Activated CD4-positive, alpha-beta T cell treated with anti-CD3 and anti-CD28 coated beads for 36 hours (primary cell): ENCODE measurements at regions of chr13 and their contacts with region 1.

Region 1: GRCh38 chr13:42271337-42272114 is 426 bp upstream of the AKAP11 start:
- DNase-seq: peak; percentile 95
- ATAC-seq: peak; percentile 87
- H3K4me3 Mint-ChIP-seq: peak overlapping the region; percentile 99
- H3K27ac Mint-ChIP-seq: peak overlapping the region; percentile 93
- H3K4me1 Mint-ChIP-seq: peaks cover 48% of the 10 kb centered on the region
- H3K27me3 Mint-ChIP-seq: no peaks in the 10 kb centered on the region

Region 2: GRCh38 chr13:41061075-41061913 is 1210.2 kb before region 1 on chr13 and contains the start of gene WBP4:
- CTCF ChIA-PET with region 1: no interaction called
- POLR2A ChIA-PET with region 1: no interaction called
- intact Hi-C with region 1: loop called in 1 of 2 experiments (anchors 10 kb)
- DNase-seq: peak; percentile 93
- ATAC-seq: peak; percentile 77
- H3K4me3 Mint-ChIP-seq: peak within 1 kb of the TSS; percentile 98
- H3K27ac Mint-ChIP-seq: peak within 1 kb of the TSS; percentile 100
- H3K4me1 Mint-ChIP-seq: peaks cover 57% of the 10 kb centered on the region
- H3K27me3 Mint-ChIP-seq: no peaks in the 10 kb centered on the region
- total RNA-seq, gene WBP4: 13.3 to 16.2 TPM

Region 3: GRCh38 chr13:41456768-41457588 is 814.5 kb before region 1 on chr13 and contains the start of gene RGCC:
- CTCF ChIA-PET with region 1: no interaction called
- POLR2A ChIA-PET with region 1: no interaction called
- intact Hi-C with region 1: loop called (anchors 2 to 10 kb)
- DNase-seq: peak; percentile 96
- ATAC-seq: peak; percentile 74
- H3K4me3 Mint-ChIP-seq: peak within 1 kb of the TSS; percentile 82
- H3K27ac Mint-ChIP-seq: peak within 1 kb of the TSS; percentile 97
- H3K4me1 Mint-ChIP-seq: peaks cover 36% of the 10 kb centered on the region
- H3K27me3 Mint-ChIP-seq: no peaks in the 10 kb centered on the region
- total RNA-seq, gene RGCC: 134 to 146 TPM

Region 4: DNA sequence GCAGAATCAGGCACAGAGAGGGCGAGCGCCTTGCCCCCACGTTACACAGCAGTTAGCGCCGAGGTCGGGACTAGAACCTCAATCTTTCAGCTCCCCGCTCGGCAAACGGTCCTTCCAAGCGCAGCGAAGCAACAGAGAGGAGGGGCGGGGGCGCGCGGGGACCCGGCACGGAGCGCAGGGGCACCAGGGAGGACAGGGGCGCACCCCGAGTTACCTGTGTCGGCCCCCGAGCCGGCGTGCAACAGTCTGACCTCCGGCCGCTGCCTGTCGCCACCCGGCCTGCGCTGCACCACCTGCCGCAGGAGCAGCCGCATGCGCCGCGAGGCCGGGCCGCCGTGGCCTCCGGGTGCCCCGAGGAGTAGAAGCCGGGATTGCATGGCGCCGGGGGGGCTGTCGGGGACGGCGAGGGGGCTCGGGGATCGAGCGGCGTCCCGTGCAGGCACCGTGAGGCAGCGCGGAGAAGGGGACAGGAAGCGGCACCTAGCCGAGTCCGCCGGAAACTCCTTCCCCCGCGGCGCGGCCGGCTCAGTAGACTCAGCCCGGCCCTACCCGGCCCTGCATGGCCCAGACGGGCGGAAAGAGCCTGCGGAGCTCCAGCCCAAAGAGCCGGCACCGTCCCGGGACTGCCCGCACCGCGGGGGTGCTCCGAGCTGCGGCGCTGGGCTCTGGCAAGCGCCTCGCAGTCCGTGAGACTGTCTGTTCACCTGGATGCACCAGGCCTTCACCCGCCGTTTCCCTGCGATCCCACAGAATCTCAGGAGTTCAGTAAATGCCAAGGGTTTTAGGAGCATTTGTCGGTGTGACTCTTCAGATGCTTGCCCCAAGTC is 310.7 kb before region 1 on chr13 and contains the start of gene VWA8:
- CTCF ChIA-PET with region 1: no interaction called
- POLR2A ChIA-PET with region 1: no interaction called
- intact Hi-C with region 1: loop called in 1 of 2 experiments (anchors 2 kb)
- DNase-seq: peak; percentile 93
- ATAC-seq: peak; percentile 81
- H3K4me3 Mint-ChIP-seq: peak within 1 kb of the TSS; percentile 92
- H3K27ac Mint-ChIP-seq: peak within 1 kb of the TSS; percentile 99
- H3K4me1 Mint-ChIP-seq: peaks cover 60% of the 10 kb centered on the region
- H3K27me3 Mint-ChIP-seq: peaks cover 2% of the 10 kb centered on the region
- total RNA-seq, gene VWA8: 21.7 to 26.2 TPM

Region 5: DNA sequence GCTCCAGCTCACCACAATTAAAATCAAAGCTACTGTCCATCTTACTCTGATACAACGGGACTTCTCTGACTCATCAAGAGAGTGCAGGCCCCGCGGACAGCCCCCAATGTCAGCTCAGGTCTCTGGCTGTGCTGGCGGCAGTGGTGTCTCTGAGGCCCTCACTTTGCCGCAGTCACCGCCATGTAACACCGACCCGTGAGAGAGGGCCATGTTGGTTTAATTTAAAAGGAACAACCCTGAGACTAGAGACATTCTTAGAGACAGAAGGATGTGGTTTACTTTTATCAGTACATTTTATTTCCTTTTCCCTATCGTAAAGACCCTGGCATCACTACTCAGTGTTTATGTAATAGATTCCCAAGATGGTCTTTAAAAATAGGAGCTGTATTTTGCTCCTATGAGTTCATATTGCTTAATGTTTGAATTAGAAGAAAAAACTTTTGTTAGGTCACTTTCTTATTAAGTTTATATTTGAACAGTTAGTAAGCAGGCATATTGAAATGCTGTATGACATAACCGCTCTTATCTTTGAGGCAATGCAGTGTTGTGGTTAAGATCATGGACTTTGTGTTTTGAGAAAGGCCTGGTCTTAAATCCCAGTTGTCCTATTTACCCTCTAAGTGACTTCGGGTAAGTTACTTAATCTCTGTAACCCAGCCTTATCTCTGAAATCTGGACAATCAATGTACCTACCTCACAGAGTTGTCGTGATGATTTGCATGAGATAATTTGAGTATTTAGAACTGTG is 199.7 kb before region 1 on chr13:
- CTCF ChIA-PET with region 1: no interaction called
- POLR2A ChIA-PET with region 1: no interaction called
- intact Hi-C with region 1: no loop called
- DNase-seq: no peak
- ATAC-seq: no peak
- H3K4me3 Mint-ChIP-seq: no peak overlapping the region
- H3K27ac Mint-ChIP-seq: no peak overlapping the region
- H3K4me1 Mint-ChIP-seq: peaks cover 33% of the 10 kb centered on the region
- H3K27me3 Mint-ChIP-seq: no peaks in the 10 kb centered on the region

Region 6: DNA sequence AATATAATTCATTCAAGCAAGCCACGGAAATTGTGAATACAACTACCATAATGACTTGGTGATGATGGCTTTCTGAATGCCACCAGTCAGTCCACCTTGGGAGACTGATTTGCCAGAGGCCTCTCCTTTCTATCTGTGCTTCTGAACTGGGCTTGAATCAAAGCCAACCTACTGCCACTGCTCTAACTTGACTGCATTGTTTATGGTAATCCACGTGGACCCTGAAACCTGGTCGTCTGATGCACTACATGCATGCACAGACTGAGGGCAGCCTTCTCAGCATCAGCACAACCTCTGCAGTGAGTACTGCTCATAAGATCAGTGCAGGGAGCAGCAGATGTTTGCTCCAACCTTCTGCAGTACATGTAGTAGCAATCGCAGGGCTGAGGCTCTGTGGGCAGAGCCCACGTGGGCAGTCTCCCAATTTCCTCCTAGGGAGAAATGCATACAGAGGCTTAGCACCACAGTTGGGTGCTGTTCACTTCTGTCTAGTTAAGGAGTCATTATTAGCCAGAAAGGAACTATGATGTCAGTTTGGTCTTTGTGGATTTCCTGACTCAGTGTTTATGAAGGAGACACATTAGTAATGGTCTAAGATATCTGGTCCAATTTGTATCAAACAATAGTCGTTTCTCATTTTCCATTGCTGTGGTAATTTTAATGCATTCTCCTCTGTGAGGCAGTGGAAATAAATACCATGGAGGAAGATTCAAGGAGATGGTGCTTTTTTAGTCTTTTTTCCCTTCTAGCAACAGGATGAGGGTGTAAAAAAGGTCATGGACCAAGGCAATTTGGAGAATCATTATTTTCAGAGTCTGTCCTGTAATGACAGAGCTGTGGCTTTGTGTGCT is 82.9 kb after region 1 on chr13:
- CTCF ChIA-PET with region 1: no interaction called
- POLR2A ChIA-PET with region 1: interaction called, 5 read pairs
- intact Hi-C with region 1: loop called (anchors 1 kb)
- DNase-seq: peak; percentile 67
- ATAC-seq: peak; percentile 62
- H3K4me3 Mint-ChIP-seq: peak overlapping the region; percentile 67
- H3K27ac Mint-ChIP-seq: peak overlapping the region; percentile 100
- H3K4me1 Mint-ChIP-seq: peaks cover 73% of the 10 kb centered on the region
- H3K27me3 Mint-ChIP-seq: no peaks in the 10 kb centered on the region

Region 7: DNA sequence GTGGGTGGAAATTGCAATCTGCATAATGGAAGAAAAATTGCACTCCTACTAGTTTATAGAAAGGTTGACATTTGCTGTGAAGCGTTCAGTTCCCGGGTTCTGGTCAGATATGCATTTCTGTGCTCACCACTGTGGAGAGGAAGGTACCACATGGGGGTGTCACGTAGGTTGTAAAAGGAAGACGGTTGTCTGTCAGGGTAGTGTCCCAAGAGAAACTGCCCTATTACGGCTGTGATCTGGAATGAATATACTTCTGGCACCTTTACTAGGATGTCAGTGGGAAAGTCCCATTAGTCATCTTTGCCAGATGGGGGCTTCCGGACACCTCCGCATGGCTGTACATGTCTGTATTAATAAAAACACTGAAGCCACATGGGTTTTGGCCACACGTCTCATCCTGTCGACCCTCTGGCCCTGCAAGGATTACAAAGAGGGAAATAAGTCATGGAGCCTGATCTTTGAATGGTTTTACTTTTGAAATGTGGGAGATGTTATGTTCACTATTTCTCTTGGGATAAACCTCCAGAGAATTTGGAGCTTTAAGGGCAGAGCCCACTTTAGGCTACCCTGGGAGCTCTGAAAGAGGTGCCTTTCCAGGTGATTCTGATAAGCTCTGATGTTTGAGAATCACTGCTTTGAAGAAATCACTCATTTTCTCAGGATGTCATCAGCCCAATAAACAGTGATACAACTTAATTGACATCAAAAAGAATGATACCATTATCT is 134.3 kb after region 1 on chr13:
- CTCF ChIA-PET with region 1: no interaction called
- POLR2A ChIA-PET with region 1: no interaction called
- intact Hi-C with region 1: loop called in 1 of 2 experiments (anchors 5 kb)
- DNase-seq: peak; percentile 83
- ATAC-seq: peak; percentile 86
- H3K4me3 Mint-ChIP-seq: peak overlapping the region; percentile 48
- H3K27ac Mint-ChIP-seq: peak overlapping the region; percentile 94
- H3K4me1 Mint-ChIP-seq: peaks cover 62% of the 10 kb centered on the region
- H3K27me3 Mint-ChIP-seq: no peaks in the 10 kb centered on the region

Region 8: DNA sequence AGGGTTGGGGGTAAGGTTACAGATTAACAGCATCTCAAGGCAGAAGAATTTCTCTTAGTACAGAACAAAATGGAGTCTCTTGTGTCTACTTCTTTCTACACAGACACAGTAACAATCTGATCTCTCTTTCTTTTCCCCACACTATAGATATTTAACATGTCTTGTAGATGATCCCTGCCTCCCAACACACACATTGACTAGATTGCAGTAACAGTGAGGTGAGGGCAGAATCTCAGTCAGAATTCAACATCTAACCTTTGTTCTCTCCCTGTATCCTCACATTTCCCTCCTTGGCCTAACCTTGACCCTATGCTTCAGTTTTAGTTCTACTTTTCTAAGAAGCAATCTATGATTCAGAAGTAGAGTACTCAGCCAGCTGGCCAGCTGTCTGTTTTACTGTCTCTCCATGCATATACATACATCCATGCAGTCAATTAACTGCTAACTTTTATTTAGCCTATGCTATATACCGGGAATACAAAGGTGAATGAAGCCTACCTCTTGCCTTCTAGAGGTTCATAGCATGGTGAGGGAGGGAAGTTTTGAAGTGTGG is 769.9 kb after region 1 on chr13:
- CTCF ChIA-PET with region 1: no interaction called
- POLR2A ChIA-PET with region 1: no interaction called
- intact Hi-C with region 1: loop called in 1 of 2 experiments (anchors 5 kb)
- DNase-seq: no peak
- ATAC-seq: no peak
- H3K4me3 Mint-ChIP-seq: no peak overlapping the region
- H3K27ac Mint-ChIP-seq: peak overlapping the region; percentile 17
- H3K4me1 Mint-ChIP-seq: peaks cover 72% of the 10 kb centered on the region
- H3K27me3 Mint-ChIP-seq: no peaks in the 10 kb centered on the region